ENCODE measurements at regions of chr1 and their contacts with region 1.

Region 1: GRCh38 chr1:204763706-204764427 is 78.3 kb upstream of the LRRN2 start:
- DNase-seq: peak; percentile 32 to 79 (median 65)
- ATAC-seq: peak; percentile 97
- H3K4me3 ChIP-seq: no peak overlapping the region
- H3K4me3 Mint-ChIP-seq: peak overlapping the region; percentile 22
- H3K27ac ChIP-seq: no peak overlapping the region
- H3K27ac Mint-ChIP-seq: no peak overlapping the region
- H3K4me1 ChIP-seq: peaks cover 9% of the 10 kb centered on the region
- H3K4me1 Mint-ChIP-seq: peaks cover 8% of the 10 kb centered on the region
- H3K27me3 ChIP-seq: no peaks in the 10 kb centered on the region
- H3K27me3 Mint-ChIP-seq: peaks cover 10% of the 10 kb centered on the region
- CTCF ChIP-seq: peak; percentile 85

Region 2: DNA sequence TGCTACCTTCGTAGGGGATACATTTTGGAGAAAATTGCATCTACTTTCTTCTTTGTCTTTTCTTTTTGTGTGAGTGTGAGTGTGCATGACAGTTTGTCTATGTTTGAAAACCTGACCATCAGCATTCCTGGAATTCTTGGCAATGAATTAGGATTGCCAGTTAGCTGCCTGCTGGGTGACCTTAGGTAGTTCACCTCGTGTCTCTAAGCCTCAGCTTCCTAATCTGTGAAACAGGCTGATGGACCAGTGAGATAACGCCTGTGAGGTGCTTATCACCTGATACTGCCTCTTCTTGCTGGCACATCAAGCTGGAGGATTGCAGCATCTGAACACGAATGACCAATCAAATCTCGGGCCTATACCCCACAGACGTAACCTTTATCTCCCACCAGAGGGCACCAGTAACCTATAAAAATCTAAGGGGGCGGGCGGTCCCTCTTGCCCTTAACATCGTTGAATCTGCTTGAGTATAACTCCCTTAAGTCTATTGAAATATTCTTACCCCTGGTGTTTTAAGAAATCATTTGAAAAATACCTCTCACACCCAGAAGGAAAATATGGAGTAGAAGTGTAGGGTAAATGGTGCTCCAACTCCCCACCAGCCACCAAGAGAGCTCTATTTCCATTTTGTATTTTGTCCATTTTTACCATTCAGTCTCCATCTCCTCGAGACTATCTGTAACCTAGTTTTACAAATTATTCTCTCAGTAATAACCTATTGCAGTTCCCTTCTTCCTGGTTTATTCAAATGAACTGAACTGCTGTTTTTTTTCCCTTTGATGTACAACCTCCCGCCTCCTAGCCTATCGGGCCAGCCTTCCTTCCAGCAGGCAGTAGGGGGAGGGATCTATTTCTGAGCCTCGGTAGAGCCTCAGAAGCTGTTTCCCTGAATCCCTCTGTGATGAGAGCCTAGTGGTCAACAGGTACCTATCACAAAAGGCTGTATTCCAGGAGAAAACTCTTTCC is 198.0 kb before region 1 on chr1:
- CTCF ChIA-PET with region 1: interaction called, 27 read pairs
- POLR2A ChIA-PET with region 1: interaction called, 3 read pairs
- intact Hi-C with region 1: loop called (anchors 1 kb)
- DNase-seq: peak; percentile 25 to 84 (median 55)
- ATAC-seq: peak; percentile 93
- H3K4me3 ChIP-seq: no peak overlapping the region
- H3K4me3 Mint-ChIP-seq: no peak overlapping the region
- H3K27ac ChIP-seq: peak overlapping the region in 1 of 2 experiments; percentile 9
- H3K27ac Mint-ChIP-seq: peak overlapping the region; percentile 10
- H3K4me1 ChIP-seq: peaks cover 35% of the 10 kb centered on the region
- H3K4me1 Mint-ChIP-seq: peaks cover 52% of the 10 kb centered on the region
- H3K27me3 ChIP-seq: no peaks in the 10 kb centered on the region
- H3K27me3 Mint-ChIP-seq: no peaks in the 10 kb centered on the region
- CTCF ChIP-seq: peak; percentile 70

Region 3: GRCh38 chr1:204746838-204747442 is 16.9 kb before region 1 on chr1:
- CTCF ChIA-PET with region 1: interaction called, 17 read pairs
- POLR2A ChIA-PET with region 1: interaction called, 4 read pairs
- intact Hi-C with region 1: no loop called
- DNase-seq: peak; percentile 10 to 72 (median 52)
- ATAC-seq: peak; percentile 86
- H3K4me3 ChIP-seq: no peak overlapping the region
- H3K4me3 Mint-ChIP-seq: no peak overlapping the region
- H3K27ac ChIP-seq: no peak overlapping the region
- H3K27ac Mint-ChIP-seq: no peak overlapping the region
- H3K4me1 ChIP-seq: no peaks in the 10 kb centered on the region
- H3K4me1 Mint-ChIP-seq: no peaks in the 10 kb centered on the region
- H3K27me3 ChIP-seq: no peaks in the 10 kb centered on the region
- H3K27me3 Mint-ChIP-seq: peaks cover 8% of the 10 kb centered on the region
- CTCF ChIP-seq: peak; percentile 98

Region 4: GRCh38 chr1:204751894-204752687 is 11.8 kb before region 1 on chr1:
- CTCF ChIA-PET with region 1: interaction called, 17 read pairs
- POLR2A ChIA-PET with region 1: no interaction called
- intact Hi-C with region 1: no loop called
- DNase-seq: no peak
- ATAC-seq: no peak
- H3K4me3 ChIP-seq: no peak overlapping the region
- H3K4me3 Mint-ChIP-seq: no peak overlapping the region
- H3K27ac ChIP-seq: no peak overlapping the region
- H3K27ac Mint-ChIP-seq: no peak overlapping the region
- H3K4me1 ChIP-seq: no peaks in the 10 kb centered on the region
- H3K4me1 Mint-ChIP-seq: no peaks in the 10 kb centered on the region
- H3K27me3 ChIP-seq: no peaks in the 10 kb centered on the region
- H3K27me3 Mint-ChIP-seq: peaks cover 14% of the 10 kb centered on the region
- CTCF ChIP-seq: no peak

Region 5: DNA sequence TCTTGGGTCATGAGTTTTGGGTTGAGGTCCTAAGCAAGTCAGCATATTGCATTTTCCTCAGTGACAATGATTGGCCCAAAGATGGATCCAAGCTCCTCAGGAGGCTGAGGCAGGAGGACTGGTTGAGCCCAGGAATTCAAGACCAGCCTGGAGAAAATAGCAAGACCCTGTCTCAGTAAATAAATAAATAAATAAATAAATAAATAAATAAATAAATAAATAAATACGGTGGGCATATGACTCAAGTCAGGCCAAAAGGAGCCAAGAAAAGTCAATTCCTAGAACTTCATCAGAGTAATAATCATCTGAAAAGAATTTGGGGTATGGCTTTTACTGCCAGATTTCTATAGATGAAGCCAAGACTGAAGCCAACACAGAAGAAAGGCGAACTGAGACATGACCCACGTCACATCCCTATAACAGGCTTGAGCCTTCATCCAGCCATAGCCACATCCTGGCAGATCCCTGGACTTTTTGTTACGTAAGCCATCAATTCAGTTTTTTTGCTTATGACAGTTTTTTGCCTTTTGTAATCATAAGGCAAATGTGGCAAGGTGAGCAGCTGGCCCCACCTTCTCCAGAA is 18.3 kb after region 1 on chr1:
- CTCF ChIA-PET with region 1: interaction called, 13 read pairs
- POLR2A ChIA-PET with region 1: no interaction called
- intact Hi-C with region 1: no loop called
- DNase-seq: no peak
- ATAC-seq: no peak
- H3K4me3 ChIP-seq: no peak overlapping the region
- H3K4me3 Mint-ChIP-seq: no peak overlapping the region
- H3K27ac ChIP-seq: no peak overlapping the region
- H3K27ac Mint-ChIP-seq: no peak overlapping the region
- H3K4me1 ChIP-seq: no peaks in the 10 kb centered on the region
- H3K4me1 Mint-ChIP-seq: no peaks in the 10 kb centered on the region
- H3K27me3 ChIP-seq: no peaks in the 10 kb centered on the region
- H3K27me3 Mint-ChIP-seq: peaks cover 14% of the 10 kb centered on the region
- CTCF ChIP-seq: no peak

Measured in CD8-positive, alpha-beta T cell (primary cell).